Mammary epithelial cell (primary cell): ENCODE measurements at regions of chr10 and their contacts with region 1.

Region 1: DNA sequence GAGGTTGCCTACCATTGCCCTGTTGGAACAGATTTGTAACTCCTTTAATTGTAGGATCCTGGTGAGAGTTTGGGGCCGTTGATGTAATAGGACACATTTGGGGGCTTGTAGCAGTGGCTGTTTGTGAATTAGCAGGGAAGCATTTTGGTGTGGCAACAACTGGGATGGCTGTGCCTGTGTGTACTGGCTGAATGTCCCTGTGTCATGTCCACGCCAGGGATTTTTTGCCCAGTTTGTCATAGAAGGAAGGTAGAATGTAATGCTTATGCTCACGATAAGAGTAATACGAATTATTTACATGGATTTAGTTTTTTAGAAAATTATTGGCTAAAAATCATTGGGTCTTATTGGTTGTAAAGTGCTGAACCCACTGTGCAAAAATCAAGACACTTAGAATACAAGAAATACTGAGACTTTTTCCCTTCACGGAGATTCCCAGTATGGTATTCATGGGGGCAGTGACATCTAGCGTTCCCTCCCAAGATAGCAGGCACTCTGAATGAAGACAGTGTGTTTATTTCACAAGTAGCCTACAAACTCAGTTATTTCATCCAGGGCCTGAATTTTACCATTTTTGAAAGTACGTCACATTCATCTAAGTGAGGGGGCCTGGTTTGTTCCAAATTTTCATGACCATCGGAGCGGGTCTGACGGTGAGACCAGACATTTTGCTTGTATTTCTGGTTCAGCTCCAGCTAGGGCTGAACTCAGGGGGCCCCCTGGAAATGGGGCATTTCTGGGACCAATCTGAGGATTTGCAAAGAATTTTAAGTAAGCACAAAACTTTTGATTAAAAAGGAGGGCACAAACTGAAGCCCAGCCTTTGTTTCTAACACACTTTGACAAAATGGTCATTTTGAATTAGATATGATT is 74.7 kb downstream of the CACNB2 start:
- DNase-seq: peak; percentile 17
- H3K4me3 ChIP-seq: no peak overlapping the region
- H3K27ac ChIP-seq: no peak overlapping the region
- H3K4me1 ChIP-seq: no peaks in the 10 kb centered on the region
- H3K27me3 ChIP-seq: no peaks in the 10 kb centered on the region
- CTCF ChIP-seq: peak; percentile 41 to 79

Region 2: GRCh38 chr10:17742918-17743317 is 472.0 kb before region 1 on chr10:
- CTCF ChIA-PET with region 1: no interaction called
- dilution Hi-C with region 1: no loop called
- in situ Hi-C with region 1: no loop called
- intact Hi-C with region 1: loop called (anchors 1 kb)
- DNase-seq: peak; percentile 19
- H3K4me3 ChIP-seq: no peak overlapping the region
- H3K27ac ChIP-seq: no peak overlapping the region
- H3K4me1 ChIP-seq: no peaks in the 10 kb centered on the region
- H3K27me3 ChIP-seq: no peaks in the 10 kb centered on the region
- CTCF ChIP-seq: peak; percentile 73 to 86

Region 3: DNA sequence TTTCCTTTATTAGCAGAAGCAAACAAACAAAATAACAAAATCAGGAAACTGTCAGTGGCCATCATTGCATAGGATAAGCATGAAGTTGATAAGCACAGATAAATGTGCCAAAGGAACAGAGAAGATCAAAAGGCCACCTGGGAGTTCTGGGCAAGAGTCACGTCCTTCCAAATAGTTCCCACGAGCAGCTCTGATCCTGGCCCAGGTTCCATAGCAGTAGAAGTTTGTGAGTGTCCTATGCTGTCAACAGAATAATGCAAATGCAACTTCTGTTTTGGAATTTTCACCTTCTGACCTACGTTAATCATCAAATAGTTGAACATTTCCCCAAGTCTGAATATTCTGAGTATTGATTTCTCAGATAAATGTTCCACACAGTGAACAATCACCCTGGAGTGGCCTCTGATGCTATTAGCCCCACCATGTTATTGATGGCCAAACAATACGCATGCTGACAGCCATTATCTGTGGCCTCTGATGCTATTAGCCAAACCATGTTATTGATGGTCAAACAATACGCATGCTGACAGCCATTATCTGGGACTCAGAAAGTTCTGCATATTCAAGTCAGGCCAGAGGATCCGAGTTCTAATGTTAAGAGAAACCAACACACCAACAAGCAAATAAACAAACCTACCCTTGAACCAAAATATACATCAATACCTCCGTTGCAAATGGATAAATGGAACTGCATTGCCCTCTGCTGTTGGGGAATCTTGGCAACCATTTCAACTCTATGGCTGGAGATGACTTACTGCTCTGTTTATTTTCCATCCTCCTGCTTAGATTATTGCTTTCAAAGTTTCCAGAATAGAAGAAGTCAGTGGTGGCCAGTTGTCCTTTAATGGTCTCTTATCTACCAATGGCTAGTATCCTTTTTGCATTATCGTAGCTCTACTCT is 342.5 kb before region 1 on chr10:
- CTCF ChIA-PET with region 1: no interaction called
- dilution Hi-C with region 1: no loop called
- in situ Hi-C with region 1: loop called in 1 of 2 experiments (anchors 25 kb)
- intact Hi-C with region 1: no loop called
- DNase-seq: peak; percentile 8
- H3K4me3 ChIP-seq: no peak overlapping the region
- H3K27ac ChIP-seq: no peak overlapping the region
- H3K4me1 ChIP-seq: no peaks in the 10 kb centered on the region
- H3K27me3 ChIP-seq: no peaks in the 10 kb centered on the region
- CTCF ChIP-seq: peak; percentile 36 to 59

Region 4: DNA sequence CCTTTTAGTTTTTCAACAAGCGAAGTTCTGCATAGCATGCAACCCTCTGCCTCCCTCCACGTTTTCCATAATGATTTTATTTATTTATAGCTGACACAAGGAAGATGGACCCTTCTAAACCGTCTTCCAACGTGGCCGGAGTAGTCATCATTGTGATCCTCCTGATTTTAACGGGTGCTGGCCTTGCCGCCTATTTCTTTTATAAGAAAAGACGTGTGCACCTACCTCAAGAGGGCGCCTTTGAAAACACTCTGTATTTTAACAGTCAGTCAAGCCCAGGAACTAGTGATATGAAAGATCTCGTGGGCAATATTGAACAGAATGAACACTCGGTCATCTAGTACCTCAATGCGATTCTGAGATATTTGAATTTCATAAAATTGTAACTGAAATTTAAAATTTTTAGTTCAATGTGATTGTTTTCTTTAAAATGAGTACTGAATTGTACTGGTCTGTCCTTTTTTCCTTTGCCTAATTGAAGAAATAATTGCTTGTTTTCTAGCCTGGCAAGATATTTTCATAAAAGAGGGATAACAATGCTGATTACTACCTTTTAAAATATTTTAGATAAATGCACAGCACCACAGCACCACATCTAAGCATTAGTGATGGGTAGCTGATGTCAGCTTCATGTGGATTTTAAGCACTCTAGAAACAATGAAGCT is 304.7 kb before region 1 on chr10:
- CTCF ChIA-PET with region 1: no interaction called
- dilution Hi-C with region 1: no loop called
- in situ Hi-C with region 1: no loop called
- intact Hi-C with region 1: loop called (anchors 1 kb)
- DNase-seq: peak; percentile 27
- H3K4me3 ChIP-seq: no peak overlapping the region
- H3K27ac ChIP-seq: no peak overlapping the region
- H3K4me1 ChIP-seq: no peaks in the 10 kb centered on the region
- H3K27me3 ChIP-seq: no peaks in the 10 kb centered on the region
- CTCF ChIP-seq: peak; percentile 24 to 57

Region 5: GRCh38 chr10:17951868-17952371 is 263.0 kb before region 1 on chr10 and contains the start of gene SLC39A12:
- CTCF ChIA-PET with region 1: no interaction called
- dilution Hi-C with region 1: no loop called
- in situ Hi-C with region 1: no loop called
- intact Hi-C with region 1: no loop called
- DNase-seq: peak; percentile 42
- H3K4me3 ChIP-seq: no peak within 1 kb of the TSS
- H3K27ac ChIP-seq: no peak within 1 kb of the TSS
- H3K4me1 ChIP-seq: no peaks in the 10 kb centered on the region
- H3K27me3 ChIP-seq: no peaks in the 10 kb centered on the region
- CTCF ChIP-seq: no peak
- total RNA-seq, gene SLC39A12: not detected